Caco-2 (cell line): ENCODE measurements at regions of chr6 and their contacts with region 1.

Region 1: DNA sequence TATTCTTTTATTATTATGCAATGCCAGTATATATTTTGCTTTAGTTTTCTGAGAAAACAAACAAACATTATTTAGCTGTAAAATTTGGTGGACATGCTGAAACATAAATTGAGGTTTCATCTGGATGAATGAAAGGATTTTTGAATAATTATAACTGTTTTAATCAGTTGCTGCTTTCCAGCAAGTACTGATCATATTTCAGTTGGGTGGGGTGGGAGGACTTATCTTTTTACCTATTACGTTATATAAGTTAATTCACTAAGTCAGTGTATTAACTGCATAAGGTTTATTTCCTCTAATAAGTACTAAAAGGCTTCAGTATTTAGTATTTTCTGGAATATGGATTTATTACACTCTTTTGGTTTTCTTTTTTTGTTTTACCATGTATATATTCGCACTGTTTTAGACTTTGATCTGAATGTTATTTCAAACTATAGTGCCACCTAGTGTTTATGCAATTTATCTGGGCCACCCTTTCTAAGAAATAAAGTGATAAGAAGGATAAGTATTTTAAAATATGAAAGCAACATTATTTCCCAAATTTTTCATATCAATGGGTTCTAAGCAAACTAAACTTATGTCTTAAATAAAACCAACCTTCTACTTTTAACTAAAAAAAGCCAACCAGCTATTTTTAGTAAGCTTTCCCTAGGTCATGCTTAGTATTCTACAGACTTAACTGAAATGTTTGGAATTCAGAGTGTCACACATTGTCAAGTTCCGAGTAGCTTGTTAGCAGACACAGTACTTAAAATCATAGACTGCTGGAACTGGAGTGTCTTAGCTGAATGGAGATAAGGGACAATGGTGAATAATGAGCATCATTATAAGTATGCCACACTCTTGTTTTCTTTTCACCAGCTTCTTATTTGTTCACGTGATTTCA is 105.4 kb upstream of the MCHR2 start:
- DNase-seq: no peak
- H3K4me3 ChIP-seq: no peak overlapping the region
- H3K4me3 Mint-ChIP-seq: no peak overlapping the region
- H3K27ac Mint-ChIP-seq: no peak overlapping the region
- H3K4me1 ChIP-seq: no peaks in the 10 kb centered on the region
- H3K4me1 Mint-ChIP-seq: no peaks in the 10 kb centered on the region
- H3K27me3 ChIP-seq: no peaks in the 10 kb centered on the region
- H3K27me3 Mint-ChIP-seq: no peaks in the 10 kb centered on the region
- CTCF ChIP-seq: peak; percentile 24 to 43

Region 2: DNA sequence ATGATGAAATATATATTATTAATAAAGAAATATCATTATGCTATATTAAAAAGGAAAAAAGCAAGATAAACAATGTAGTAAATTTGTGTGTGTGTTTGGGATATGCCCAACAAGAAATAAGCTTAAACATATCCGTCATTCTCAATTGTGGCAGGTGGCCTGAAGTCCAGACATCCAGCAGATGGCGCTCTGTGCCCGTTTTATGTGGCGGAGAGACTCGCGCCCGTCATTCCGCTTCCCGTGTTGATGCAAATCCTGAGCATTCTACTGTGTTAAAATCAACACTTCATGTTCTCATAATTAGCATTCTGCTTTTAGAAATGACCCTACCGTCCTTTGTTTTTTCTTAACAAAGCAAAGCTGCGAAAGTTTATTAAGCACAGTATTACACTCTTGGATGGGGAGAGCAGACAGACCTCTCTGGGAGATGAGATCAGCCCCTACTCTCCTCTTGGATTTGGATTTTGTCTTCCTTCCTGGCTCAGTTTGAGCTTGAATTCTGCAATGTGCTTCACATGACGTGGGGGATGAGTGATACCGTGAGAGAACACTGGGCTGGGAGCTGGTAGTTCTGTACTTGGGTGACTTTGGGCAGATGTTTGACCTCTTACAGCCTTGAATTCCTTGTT is 231.2 kb before region 1 on chr6:
- CTCF ChIA-PET with region 1: interaction called, 5 read pairs
- POLR2A ChIA-PET with region 1: no interaction called
- intact Hi-C with region 1: loop called (anchors 1 kb)
- DNase-seq: peak; percentile 56 to 76
- H3K4me3 ChIP-seq: no peak overlapping the region
- H3K4me3 Mint-ChIP-seq: no peak overlapping the region
- H3K27ac Mint-ChIP-seq: no peak overlapping the region
- H3K4me1 ChIP-seq: no peaks in the 10 kb centered on the region
- H3K4me1 Mint-ChIP-seq: no peaks in the 10 kb centered on the region
- H3K27me3 ChIP-seq: peaks cover 2% of the 10 kb centered on the region; the same call in 1 of the 2 replicates
- H3K27me3 Mint-ChIP-seq: peaks cover 12% of the 10 kb centered on the region
- CTCF ChIP-seq: peak; percentile 85 to 87

Region 3: DNA sequence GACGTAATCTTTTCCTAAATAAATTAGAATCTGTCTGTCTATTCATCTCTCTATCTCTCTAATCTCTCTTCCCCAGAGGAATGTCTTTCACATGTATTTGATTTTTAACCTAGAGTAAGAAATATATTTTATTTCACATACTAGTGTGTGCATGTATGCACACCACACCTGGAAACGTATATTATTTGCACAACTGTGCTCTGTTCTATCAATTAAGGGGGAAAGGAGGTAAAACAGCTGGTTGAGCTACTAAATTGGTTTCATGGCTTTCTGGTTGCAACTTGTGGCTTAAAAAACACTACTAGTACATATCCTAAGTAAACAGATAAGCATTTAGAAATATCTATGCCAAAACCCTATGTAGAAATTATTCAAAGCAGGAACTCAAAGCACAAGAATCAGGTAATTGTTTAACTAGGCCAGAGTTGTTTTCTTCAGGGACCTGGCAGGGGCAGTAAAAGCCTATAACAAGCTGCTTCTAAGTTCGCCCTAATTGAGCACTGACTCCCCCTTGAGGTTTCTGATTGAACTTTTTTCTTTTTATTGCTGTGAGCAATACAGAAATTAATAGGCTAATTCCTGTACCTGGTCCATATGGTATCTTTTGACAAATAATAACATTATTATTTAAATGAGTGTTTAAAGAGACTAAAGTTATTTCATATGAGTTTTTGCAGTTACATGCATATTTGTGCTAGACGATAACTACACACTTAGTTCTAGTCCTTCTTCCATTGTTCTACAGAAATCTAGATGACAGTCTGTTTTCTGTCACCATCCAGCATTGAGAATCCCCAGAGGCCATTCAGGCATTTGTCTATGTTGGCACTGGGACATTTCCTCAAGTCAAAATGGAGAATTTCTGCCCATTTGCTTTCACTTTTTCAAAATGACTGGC is 194.0 kb before region 1 on chr6:
- CTCF ChIA-PET with region 1: no interaction called
- POLR2A ChIA-PET with region 1: no interaction called
- intact Hi-C with region 1: loop called (anchors 1 kb)
- DNase-seq: peak in 1 of 2 experiments; percentile 49
- H3K4me3 ChIP-seq: no peak overlapping the region
- H3K4me3 Mint-ChIP-seq: no peak overlapping the region
- H3K27ac Mint-ChIP-seq: no peak overlapping the region
- H3K4me1 ChIP-seq: no peaks in the 10 kb centered on the region
- H3K4me1 Mint-ChIP-seq: no peaks in the 10 kb centered on the region
- H3K27me3 ChIP-seq: no peaks in the 10 kb centered on the region
- H3K27me3 Mint-ChIP-seq: peaks cover 19% of the 10 kb centered on the region
- CTCF ChIP-seq: peak; percentile 67

Region 4: GRCh38 chr6:99940582-99940981 is 158.8 kb before region 1 on chr6:
- CTCF ChIA-PET with region 1: no interaction called
- POLR2A ChIA-PET with region 1: no interaction called
- intact Hi-C with region 1: loop called (anchors 1 kb)
- DNase-seq: no peak
- H3K4me3 ChIP-seq: no peak overlapping the region
- H3K4me3 Mint-ChIP-seq: no peak overlapping the region
- H3K27ac Mint-ChIP-seq: no peak overlapping the region
- H3K4me1 ChIP-seq: no peaks in the 10 kb centered on the region
- H3K4me1 Mint-ChIP-seq: no peaks in the 10 kb centered on the region
- H3K27me3 ChIP-seq: no peaks in the 10 kb centered on the region
- H3K27me3 Mint-ChIP-seq: peaks cover 18% of the 10 kb centered on the region
- CTCF ChIP-seq: no peak

Region 5: DNA sequence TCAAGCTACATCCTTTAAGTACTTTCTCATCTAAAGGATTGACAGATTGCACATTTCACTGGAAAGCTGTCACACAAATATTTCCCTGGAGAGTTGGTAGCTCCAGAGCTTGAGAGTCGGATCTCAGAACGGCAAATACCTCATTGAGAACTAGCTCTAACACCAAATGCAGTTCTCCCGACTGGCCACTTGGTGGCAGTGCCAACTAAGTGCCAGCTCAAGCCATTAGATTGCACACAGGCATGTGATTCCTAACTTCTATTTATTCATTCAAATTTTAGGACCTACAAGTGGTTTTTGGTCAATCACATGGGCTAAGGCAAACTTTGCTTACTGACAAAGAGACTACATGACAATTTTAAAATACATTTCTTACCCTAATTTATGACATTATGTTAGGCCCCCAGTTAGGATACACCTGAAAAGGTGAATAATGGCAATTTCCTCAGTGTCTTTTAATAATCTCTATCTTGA is 97.5 kb before region 1 on chr6:
- CTCF ChIA-PET with region 1: interaction called, 10 read pairs
- POLR2A ChIA-PET with region 1: no interaction called
- intact Hi-C with region 1: loop called (anchors 1 kb)
- DNase-seq: peak; percentile 41 to 45
- H3K4me3 ChIP-seq: no peak overlapping the region
- H3K4me3 Mint-ChIP-seq: no peak overlapping the region
- H3K27ac Mint-ChIP-seq: no peak overlapping the region
- H3K4me1 ChIP-seq: no peaks in the 10 kb centered on the region
- H3K4me1 Mint-ChIP-seq: no peaks in the 10 kb centered on the region
- H3K27me3 ChIP-seq: no peaks in the 10 kb centered on the region
- H3K27me3 Mint-ChIP-seq: peaks cover 8% of the 10 kb centered on the region
- CTCF ChIP-seq: peak; percentile 85 to 92